Right cardiac atrium (tissue), 5 donors: ENCODE measurements at regions of chr10 and their contacts with region 1.

Region 1: DNA sequence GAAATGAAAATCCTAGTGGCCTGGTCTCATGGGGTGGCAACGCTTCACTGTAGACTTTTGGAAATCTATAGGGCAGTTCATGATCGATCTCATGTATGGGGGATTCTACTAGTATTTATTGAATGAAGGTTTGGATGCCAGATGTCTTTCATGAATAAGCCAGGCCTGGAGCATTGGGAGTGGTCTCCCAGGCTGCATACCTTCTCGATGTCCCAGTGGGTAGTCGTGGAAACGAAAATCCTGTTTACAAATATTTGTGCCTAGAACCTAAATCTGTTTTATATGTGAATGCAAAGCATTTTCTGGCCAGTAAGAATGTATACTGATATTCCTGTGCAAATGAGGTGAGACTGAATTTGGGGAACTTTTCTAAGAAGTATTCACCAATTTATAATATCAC is 105.0 kb upstream of the C1QL3 start:
- DNase-seq: no peak
- ATAC-seq: no peak
- H3K4me3 ChIP-seq: no peak overlapping the region
- H3K27ac ChIP-seq: no peak overlapping the region
- H3K4me1 ChIP-seq: peaks cover 3% of the 10 kb centered on the region
- H3K27me3 ChIP-seq: no peaks in the 10 kb centered on the region

Region 2: GRCh38 chr10:16742165-16742960 is 115.7 kb after region 1 on chr10:
- intact Hi-C with region 1: loop called in 1 of 4 experiments (anchors 10 kb)
- DNase-seq: no peak
- ATAC-seq: no peak
- H3K4me3 ChIP-seq: no peak overlapping the region
- H3K27ac ChIP-seq: no peak overlapping the region
- H3K4me1 ChIP-seq: no peaks in the 10 kb centered on the region
- H3K27me3 ChIP-seq: no peaks in the 10 kb centered on the region

Region 3: GRCh38 chr10:16809074-16809718 is 182.5 kb after region 1 on chr10:
- intact Hi-C with region 1: no loop called
- DNase-seq: peak in 2 of 3 donors; percentile 33 to 76
- ATAC-seq: peak; percentile 55 to 76
- H3K4me3 ChIP-seq: no peak overlapping the region
- H3K27ac ChIP-seq: no peak overlapping the region
- H3K4me1 ChIP-seq: peaks cover 3% of the 10 kb centered on the region
- H3K27me3 ChIP-seq: no peaks in the 10 kb centered on the region